ENCODE measurements at regions of chr11 and their contacts with region 1.

Region 1: DNA sequence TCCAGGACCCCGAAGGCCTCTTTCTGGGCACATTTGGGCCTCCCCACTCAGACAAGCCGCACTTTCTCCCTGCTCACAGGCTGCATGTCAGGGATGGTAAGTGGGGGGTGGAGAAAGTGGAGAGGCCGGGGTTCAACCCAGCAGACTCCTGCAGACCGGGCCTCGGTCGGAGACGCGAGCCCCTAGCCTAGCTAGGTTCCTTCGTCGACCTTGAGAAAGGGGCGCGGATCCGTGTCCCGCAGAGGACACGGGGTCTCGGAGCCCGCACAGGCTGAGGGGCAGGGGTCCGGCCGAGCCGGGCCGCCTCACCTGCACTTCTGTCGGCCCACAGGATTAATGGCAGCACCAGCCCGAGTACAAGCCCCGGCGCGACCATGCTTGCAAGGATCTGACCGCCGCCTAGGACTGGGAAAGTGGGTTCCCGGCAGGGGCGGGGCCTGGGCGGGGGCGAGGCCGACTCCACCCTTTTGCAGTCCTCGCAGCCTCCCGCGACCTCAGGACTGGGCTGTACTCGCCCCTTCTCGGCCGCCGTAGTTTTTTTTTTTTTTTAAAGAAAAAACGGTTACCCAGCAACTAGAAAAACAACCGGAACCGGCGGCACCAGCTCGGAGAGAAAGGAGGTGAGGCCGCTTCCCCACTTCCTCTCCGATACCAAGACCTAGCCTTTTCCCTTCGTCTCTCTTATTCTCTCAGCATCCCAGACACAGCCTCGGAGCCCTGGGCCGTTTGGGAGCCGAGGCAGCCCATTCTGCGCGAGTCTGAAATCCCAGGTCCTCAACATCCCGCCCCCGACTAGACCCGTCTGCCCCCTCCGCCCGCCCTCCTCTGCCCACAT is at the starts of genes SIAE and SPA17:
- DNase-seq: peak; percentile 93
- H3K4me3 Mint-ChIP-seq: peak within 1 kb of the TSS; percentile 88
- H3K27ac Mint-ChIP-seq: peak within 1 kb of the TSS; percentile 75
- H3K4me1 Mint-ChIP-seq: peaks cover 26% of the 10 kb centered on the region
- H3K27me3 Mint-ChIP-seq: no peaks in the 10 kb centered on the region
- total RNA-seq, gene SIAE: 7.8 to 10.8 TPM
- total RNA-seq, gene SPA17: 3.9 to 5.1 TPM

Region 2: GRCh38 chr11:124114942-124115781 is 558.4 kb before region 1 on chr11 and contains the start of gene VWA5A:
- CTCF ChIA-PET with region 1: no interaction called
- intact Hi-C with region 1: loop called (anchors 1 kb)
- DNase-seq: peak; percentile 93
- H3K4me3 Mint-ChIP-seq: peak within 1 kb of the TSS; percentile 82
- H3K27ac Mint-ChIP-seq: peak within 1 kb of the TSS; percentile 56
- H3K4me1 Mint-ChIP-seq: peaks cover 9% of the 10 kb centered on the region
- H3K27me3 Mint-ChIP-seq: no peaks in the 10 kb centered on the region
- total RNA-seq, gene VWA5A: 9.7 to 11.4 TPM

Region 3: GRCh38 chr11:124499711-124500110 is 173.8 kb before region 1 on chr11:
- CTCF ChIA-PET with region 1: no interaction called
- intact Hi-C with region 1: no loop called
- DNase-seq: no peak
- H3K4me3 Mint-ChIP-seq: no peak overlapping the region
- H3K27ac Mint-ChIP-seq: no peak overlapping the region
- H3K4me1 Mint-ChIP-seq: no peaks in the 10 kb centered on the region
- H3K27me3 Mint-ChIP-seq: peaks cover 3% of the 10 kb centered on the region

Region 4: DNA sequence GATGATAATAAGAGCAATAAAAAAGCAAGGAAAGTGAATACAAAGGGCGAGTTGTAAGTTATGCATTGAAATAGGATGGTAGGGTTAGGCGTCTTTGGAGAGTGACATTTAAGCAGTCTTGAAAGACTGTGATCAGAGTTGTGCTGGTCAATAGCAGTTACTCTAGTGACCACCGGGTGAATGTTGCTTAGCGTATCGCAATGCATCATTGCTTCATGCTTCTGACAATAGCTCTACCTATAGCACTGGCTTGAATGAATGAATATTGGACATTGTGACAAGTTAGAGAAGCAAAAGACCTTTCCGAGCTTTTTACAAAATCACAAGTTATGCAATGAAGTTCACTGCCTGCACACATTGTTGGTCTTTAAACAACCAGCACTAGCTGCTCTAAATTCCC is 122.4 kb before region 1 on chr11:
- CTCF ChIA-PET with region 1: no interaction called
- intact Hi-C with region 1: no loop called
- DNase-seq: no peak
- H3K4me3 Mint-ChIP-seq: no peak overlapping the region
- H3K27ac Mint-ChIP-seq: no peak overlapping the region
- H3K4me1 Mint-ChIP-seq: no peaks in the 10 kb centered on the region
- H3K27me3 Mint-ChIP-seq: peaks cover 8% of the 10 kb centered on the region

Region 5: GRCh38 chr11:124586238-124586860 is 87.2 kb before region 1 on chr11:
- CTCF ChIA-PET with region 1: no interaction called
- intact Hi-C with region 1: no loop called
- DNase-seq: peak; percentile 70
- H3K4me3 Mint-ChIP-seq: no peak overlapping the region
- H3K27ac Mint-ChIP-seq: no peak overlapping the region
- H3K4me1 Mint-ChIP-seq: no peaks in the 10 kb centered on the region
- H3K27me3 Mint-ChIP-seq: peaks cover 14% of the 10 kb centered on the region

Region 6: DNA sequence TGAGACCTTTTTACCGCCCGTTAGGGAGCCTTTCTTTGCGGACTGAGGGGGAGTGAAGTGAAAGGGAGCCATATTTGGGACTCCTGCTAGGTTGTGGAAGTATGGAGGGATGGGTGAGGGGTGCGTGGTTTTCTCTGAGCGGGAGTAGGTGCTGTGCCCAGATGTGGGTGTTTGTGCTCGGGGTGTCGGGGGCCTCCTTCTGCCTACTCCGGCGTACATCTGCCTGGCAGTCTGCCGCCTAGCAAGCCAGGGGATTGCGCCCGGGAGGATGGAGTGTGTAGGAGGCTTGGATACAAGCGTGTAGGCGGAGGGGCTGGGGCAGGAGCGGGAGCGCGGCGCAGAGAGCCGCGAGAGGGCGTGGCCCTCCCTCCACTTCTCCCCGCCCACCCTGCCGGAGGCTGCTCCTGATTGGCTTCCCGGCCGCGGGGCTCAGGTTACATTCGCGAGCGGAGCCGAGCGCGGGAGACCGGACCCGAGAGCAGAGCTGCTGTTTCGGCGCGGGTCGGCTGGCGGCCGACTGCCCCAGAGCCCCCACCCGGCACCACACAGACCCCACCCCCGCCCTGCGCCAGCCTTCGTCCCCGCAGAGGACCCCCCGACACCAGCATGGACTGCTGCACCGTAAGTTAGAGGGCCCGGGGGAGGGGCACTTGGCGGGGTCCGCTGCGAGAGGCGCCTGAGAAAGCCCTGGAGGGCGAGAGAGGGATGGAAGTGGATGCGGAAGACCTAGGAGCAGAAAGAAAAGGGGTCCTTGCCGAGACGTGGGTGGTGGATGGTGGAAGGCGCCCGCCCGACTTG is 66.1 kb after region 1 on chr11 and contains the start of gene NRGN:
- CTCF ChIA-PET with region 1: interaction called, 14 read pairs
- intact Hi-C with region 1: loop called (anchors 1 kb)
- DNase-seq: peak; percentile 90
- H3K4me3 Mint-ChIP-seq: peak within 1 kb of the TSS; percentile 77
- H3K27ac Mint-ChIP-seq: no peak within 1 kb of the TSS
- H3K4me1 Mint-ChIP-seq: peaks cover 8% of the 10 kb centered on the region
- H3K27me3 Mint-ChIP-seq: peaks cover 2% of the 10 kb centered on the region
- total RNA-seq, gene NRGN: 10.3 to 10.8 TPM

Region 7: DNA sequence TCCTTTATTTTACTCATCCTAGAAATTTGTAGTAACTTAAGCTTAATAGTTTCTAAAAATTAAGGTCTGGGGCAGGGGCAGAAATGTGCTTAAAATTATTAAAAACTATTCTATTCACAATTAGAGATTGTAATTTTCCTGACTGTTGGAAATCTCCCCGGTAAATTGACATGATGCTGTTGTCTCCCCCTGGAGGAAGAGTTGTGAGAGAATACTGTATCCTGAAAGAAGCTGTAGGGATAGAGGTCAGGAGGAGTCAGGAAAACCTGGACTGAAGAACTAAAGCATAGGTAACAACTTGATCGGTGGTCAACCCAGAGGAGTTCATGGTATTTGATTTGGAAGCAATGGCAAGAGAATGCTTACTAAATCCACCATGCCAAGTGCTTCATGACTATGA is 104.7 kb after region 1 on chr11:
- CTCF ChIA-PET with region 1: interaction called, 10 read pairs
- intact Hi-C with region 1: no loop called
- DNase-seq: no peak
- H3K4me3 Mint-ChIP-seq: no peak overlapping the region
- H3K27ac Mint-ChIP-seq: no peak overlapping the region
- H3K4me1 Mint-ChIP-seq: peaks cover 21% of the 10 kb centered on the region
- H3K27me3 Mint-ChIP-seq: no peaks in the 10 kb centered on the region

Region 8: DNA sequence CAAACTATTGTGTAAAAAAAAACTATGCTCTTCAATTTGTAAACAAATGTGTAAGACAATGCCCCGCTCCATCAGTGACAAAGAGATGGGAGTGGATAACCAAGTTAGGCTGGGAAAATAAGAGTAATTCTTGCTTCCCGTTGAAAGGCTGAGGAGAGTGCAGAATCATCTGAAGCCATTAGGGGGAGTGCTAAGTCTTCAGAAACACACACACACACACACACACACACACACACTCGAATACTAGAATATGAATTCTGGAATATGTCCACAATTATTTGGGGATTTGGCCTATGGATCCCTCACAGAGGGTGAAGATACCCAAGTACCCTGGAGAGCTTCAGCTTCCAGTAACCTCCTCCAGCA is 163.9 kb after region 1 on chr11:
- CTCF ChIA-PET with region 1: interaction called, 68 read pairs
- intact Hi-C with region 1: loop called (anchors 1 kb)
- DNase-seq: peak; percentile 20
- H3K4me3 Mint-ChIP-seq: no peak overlapping the region
- H3K27ac Mint-ChIP-seq: no peak overlapping the region
- H3K4me1 Mint-ChIP-seq: peaks cover 20% of the 10 kb centered on the region
- H3K27me3 Mint-ChIP-seq: peaks cover 54% of the 10 kb centered on the region

Region 9: DNA sequence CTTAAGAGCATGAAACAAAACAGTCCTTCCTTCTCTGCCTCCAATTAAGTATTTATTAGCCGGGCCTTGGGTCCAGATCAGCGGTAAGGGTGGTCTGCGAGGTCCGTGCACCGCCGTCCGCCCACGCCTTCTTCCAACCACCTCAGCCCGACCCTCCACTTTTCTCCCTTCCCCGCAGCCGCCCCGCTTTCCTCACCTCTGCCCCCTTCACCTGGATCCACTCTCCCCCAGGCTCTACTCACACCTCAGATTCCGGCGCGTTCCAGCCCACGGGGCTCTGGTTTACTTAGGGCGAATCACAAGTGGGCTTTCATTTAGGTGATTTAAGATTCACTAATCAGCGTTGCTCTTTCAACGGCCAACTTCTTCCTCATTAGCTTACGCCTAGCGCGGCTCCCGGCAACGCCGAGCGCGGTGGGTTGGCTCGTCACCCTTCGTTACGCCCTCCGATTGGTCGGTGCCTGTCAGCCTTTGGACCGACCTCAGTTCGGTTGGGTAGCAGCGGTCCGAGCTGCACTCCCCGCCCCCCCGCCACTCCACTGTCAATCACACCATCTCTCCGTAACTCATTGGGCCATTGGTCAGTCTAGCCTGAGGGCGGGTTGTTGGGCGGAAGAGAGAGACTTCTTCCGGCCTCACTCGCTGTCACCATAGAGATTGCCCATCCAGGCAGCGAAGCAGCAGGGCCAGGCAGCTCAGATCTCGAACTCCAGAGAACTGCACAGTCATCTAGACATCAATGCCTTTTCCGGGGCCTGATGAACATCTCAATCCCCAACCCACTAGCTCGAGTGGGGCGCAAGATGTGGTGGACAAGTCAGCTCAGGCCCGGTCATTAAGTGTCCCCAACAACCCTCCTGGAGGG is 438.0 kb after region 1 on chr11 and contains the start of gene TMEM218:
- CTCF ChIA-PET with region 1: no interaction called
- intact Hi-C with region 1: loop called (anchors 1 kb)
- DNase-seq: peak; percentile 98
- H3K4me3 Mint-ChIP-seq: peak within 1 kb of the TSS; percentile 84
- H3K27ac Mint-ChIP-seq: peak within 1 kb of the TSS; percentile 79
- H3K4me1 Mint-ChIP-seq: peaks cover 16% of the 10 kb centered on the region
- H3K27me3 Mint-ChIP-seq: no peaks in the 10 kb centered on the region
- total RNA-seq, gene TMEM218: 11.5 to 12.6 TPM

Measured in activated naive CD4-positive, alpha-beta T cell treated with anti-CD3 and anti-CD28 coated beads for 36 hours (primary cell).